Activated CD4-positive, alpha-beta T cell treated with anti-CD3 and anti-CD28 coated beads for 36 hours (primary cell): ENCODE measurements at regions of chr1 and their contacts with region 1.

Region 1: DNA sequence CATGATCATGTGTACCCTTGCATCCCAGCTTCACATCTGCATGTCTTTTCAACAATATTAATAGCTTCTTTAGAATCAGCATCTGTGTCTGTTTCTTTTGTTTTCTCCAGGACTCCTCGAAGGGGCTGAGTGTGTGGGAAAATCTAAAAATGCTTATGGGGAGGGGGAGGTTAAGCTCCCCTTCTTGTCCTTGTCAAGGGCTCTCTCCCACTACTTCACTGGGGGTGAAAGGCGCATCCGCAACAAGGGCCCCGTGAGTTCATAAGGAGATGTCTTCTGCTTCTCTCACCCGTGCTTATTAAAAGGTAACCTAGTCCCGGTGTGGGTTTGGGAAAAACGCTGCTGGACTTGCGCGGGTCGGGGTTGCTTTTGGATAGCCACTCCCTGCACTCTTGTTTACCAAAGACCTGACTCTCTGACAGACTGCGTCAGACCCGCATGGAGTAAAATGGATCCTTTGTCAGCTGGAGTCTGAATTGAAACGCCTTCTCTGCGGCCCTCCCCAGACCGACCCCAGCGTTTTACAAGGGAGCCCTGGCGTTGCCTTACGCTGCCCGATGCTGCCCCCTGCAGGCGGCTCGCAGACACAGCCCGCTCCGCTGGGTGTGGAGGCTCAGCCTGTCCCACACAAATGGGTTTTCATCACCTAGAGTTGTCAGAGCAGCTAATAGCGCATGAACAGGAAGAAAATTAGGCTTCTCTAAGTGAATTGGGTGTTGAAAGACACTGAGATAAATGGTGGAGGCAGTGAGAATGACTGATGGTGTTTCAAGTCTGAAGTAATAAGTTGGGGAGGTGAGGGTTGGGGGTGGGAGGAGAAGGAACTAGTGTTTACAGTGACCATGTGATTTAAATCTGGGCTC is 53.8 kb downstream of the IER5 start:
- DNase-seq: peak; percentile 95
- ATAC-seq: peak; percentile 73
- H3K4me3 Mint-ChIP-seq: peak overlapping the region; percentile 33
- H3K27ac Mint-ChIP-seq: peak overlapping the region; percentile 85
- H3K4me1 Mint-ChIP-seq: peaks cover 46% of the 10 kb centered on the region
- H3K27me3 Mint-ChIP-seq: peaks cover 3% of the 10 kb centered on the region

Region 2: GRCh38 chr1:180502360-180503273 is 639.7 kb before region 1 on chr1 and contains the start of gene ACBD6:
- CTCF ChIA-PET with region 1: interaction called, 3 read pairs
- POLR2A ChIA-PET with region 1: no interaction called
- intact Hi-C with region 1: loop called in 1 of 2 experiments (anchors 5 kb)
- DNase-seq: peak; percentile 94
- ATAC-seq: peak; percentile 95
- H3K4me3 Mint-ChIP-seq: peak within 1 kb of the TSS; percentile 96
- H3K27ac Mint-ChIP-seq: peak within 1 kb of the TSS; percentile 97
- H3K4me1 Mint-ChIP-seq: peaks cover 33% of the 10 kb centered on the region
- H3K27me3 Mint-ChIP-seq: no peaks in the 10 kb centered on the region
- total RNA-seq, gene ACBD6: 45.6 to 46.8 TPM

Region 3: DNA sequence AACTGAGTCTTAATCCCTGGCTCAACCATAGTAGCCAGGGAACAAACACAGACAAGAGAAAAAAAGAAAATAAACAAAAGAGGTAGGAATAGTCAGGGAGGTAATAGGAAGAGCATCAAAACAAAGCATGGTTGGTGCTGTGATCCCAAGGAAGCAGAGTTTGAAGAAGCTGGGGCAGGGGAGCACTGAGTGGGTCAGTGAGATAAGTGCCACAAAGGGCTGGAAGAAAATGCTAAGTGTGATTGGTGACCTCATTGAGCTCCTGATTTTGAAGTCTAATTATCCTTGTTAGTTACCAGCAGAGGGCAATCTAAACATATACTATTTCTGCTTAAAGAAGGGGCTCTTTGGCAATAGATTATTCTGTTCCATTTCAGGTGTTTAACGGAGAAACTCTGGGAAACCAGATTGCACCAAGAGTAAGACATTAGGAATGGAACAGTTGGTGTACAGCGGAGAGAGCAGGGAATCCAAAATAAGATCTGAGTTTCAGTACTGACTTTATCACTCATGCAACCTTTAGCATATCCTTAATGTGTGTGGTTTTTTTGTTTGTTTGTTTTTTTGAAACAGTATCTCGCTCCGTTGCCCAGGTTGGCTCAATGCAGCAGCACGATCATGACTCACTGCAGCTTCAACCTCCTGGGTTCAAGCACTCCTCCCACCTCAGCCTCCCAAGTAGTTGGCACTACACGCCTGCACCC is 260.4 kb before region 1 on chr1:
- CTCF ChIA-PET with region 1: interaction called, 15 read pairs
- POLR2A ChIA-PET with region 1: no interaction called
- intact Hi-C with region 1: loop called (anchors 1 to 2 kb)
- DNase-seq: no peak
- ATAC-seq: peak; percentile 66
- H3K4me3 Mint-ChIP-seq: no peak overlapping the region
- H3K27ac Mint-ChIP-seq: no peak overlapping the region
- H3K4me1 Mint-ChIP-seq: no peaks in the 10 kb centered on the region
- H3K27me3 Mint-ChIP-seq: no peaks in the 10 kb centered on the region

Region 4: DNA sequence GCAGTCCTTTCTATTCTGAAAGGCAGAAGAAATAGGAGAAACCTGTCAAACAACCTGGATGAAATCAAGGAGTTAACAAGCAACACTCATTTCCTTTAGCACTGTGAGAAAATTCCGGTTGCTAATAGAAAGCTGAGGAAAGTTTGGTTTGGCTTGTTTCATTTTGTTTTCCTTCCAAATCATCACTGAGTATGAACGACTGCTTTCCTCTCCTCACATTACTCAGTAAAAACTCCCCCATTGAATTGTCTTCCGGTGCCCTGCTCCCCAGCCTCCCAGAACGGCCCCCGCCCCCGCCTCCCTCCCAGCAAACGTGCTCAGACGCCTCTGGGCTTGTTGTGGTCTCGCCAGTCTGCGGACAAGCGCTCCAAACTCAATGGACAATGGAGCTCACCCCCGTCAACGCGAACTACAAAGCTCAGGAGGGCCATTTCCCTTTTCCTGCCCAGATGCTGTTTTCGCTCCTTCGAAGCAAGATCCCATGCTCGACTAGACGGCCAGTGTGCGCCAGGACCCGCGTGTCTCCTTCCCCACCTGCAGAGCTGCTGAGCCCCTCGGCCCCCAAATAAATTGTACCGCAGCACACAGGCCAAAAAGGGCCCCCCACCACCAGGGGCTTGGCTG is 120.4 kb before region 1 on chr1:
- CTCF ChIA-PET with region 1: interaction called, 25 read pairs
- POLR2A ChIA-PET with region 1: interaction called, 4 read pairs
- intact Hi-C with region 1: loop called in 1 of 2 experiments (anchors 1 kb)
- DNase-seq: peak; percentile 85
- ATAC-seq: peak; percentile 66
- H3K4me3 Mint-ChIP-seq: peak overlapping the region; percentile 89
- H3K27ac Mint-ChIP-seq: peak overlapping the region; percentile 97
- H3K4me1 Mint-ChIP-seq: peaks cover 42% of the 10 kb centered on the region
- H3K27me3 Mint-ChIP-seq: peaks cover 5% of the 10 kb centered on the region

Region 5: GRCh38 chr1:181088079-181089016 is 54.0 kb before region 1 on chr1 and contains the start of gene IER5:
- CTCF ChIA-PET with region 1: interaction called, 75 read pairs
- POLR2A ChIA-PET with region 1: interaction called, 42 read pairs
- intact Hi-C with region 1: loop called (anchors 1 kb)
- DNase-seq: peak; percentile 97
- ATAC-seq: peak; percentile 80
- H3K4me3 Mint-ChIP-seq: peak within 1 kb of the TSS; percentile 100
- H3K27ac Mint-ChIP-seq: peak within 1 kb of the TSS; percentile 100
- H3K4me1 Mint-ChIP-seq: peaks cover 53% of the 10 kb centered on the region
- H3K27me3 Mint-ChIP-seq: no peaks in the 10 kb centered on the region
- total RNA-seq, gene IER5: 16.3 to 24.3 TPM

Region 6: GRCh38 chr1:181152892-181153633 is 10.7 kb after region 1 on chr1:
- CTCF ChIA-PET with region 1: interaction called, 26 read pairs
- POLR2A ChIA-PET with region 1: no interaction called
- intact Hi-C with region 1: no loop called
- DNase-seq: no peak
- ATAC-seq: no peak
- H3K4me3 Mint-ChIP-seq: no peak overlapping the region
- H3K27ac Mint-ChIP-seq: no peak overlapping the region
- H3K4me1 Mint-ChIP-seq: peaks cover 41% of the 10 kb centered on the region
- H3K27me3 Mint-ChIP-seq: no peaks in the 10 kb centered on the region